H1 (cell line): ENCODE measurements at regions of chr1 and their contacts with region 1.

Region 1: GRCh38 chr1:43650310-43651085 is 549 bp downstream of the KDM4A start:
- DNase-seq: peak; percentile 92 to 96
- H3K4me3 ChIP-seq: peak overlapping the region; percentile 73 to 95 (median 90)
- H3K27ac ChIP-seq: peak overlapping the region; percentile 91
- H3K4me1 ChIP-seq: peaks cover 6 to 11% (median 7%) of the 10 kb centered on the region in 4 experiments; a peak in 5 of 7 replicates
- H3K27me3 ChIP-seq: no peaks in the 10 kb centered on the region
- CTCF ChIP-seq: no peak
- EP300 ChIP-seq: 0 out of 3 replicates have a peak, but pooled peaks of 1 of the 2 experiments have one; percentile 2
- POLR2A ChIP-seq: peak; percentile 99 to 100
- RAD21 ChIP-seq: no peak

Region 2: DNA sequence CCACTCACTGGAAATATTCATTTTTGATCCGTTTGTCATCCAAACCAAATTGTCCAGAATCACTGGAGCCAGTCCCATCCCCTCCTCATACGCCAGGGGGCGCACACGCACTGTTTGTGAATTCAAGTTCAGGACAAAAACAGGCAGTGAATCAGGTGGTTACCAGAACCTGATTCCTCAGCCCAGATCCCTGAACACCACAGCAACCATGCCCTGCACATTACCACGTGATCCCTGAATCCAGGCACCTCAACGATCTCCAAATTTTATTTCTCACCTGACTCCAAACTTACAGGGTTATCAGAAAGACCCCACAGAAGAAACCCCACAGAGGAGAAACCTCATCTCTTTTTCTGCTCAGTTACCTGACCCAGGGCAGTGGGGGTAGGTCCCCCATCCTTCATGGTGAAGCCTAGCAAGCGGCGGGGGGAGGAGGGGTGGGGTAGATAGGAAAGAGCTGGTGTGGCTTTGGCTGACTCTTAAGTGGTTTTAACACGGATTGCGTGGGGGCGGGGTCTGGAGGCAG is 121.2 kb before region 1 on chr1:
- CTCF ChIA-PET with region 1: interaction called, 5 read pairs
- POLR2A ChIA-PET with region 1: interaction called, 30 read pairs
- DNase-seq: peak in 1 of 2 experiments; percentile 90
- H3K4me3 ChIP-seq: peak overlapping the region in 1 of 4 experiments; percentile 45; a peak in 1 of 8 replicates
- H3K27ac ChIP-seq: no peak overlapping the region
- H3K4me1 ChIP-seq: peaks cover 15 to 21% (median 18%) of the 10 kb centered on the region in 4 experiments
- H3K27me3 ChIP-seq: peaks cover 0 to 8% (median 6%) of the 10 kb centered on the region in 4 experiments; a peak in 5 of 7 replicates
- CTCF ChIP-seq: peak; percentile 84 to 98 (median 90)
- EP300 ChIP-seq: no peak
- POLR2A ChIP-seq: no peak
- RAD21 ChIP-seq: peak; percentile 97 to 98

Region 3: GRCh38 chr1:43622471-43622870 is 28.0 kb before region 1 on chr1:
- CTCF ChIA-PET with region 1: interaction called, 4 read pairs
- POLR2A ChIA-PET with region 1: interaction called, 11 read pairs
- DNase-seq: no peak
- H3K4me3 ChIP-seq: no peak overlapping the region
- H3K27ac ChIP-seq: no peak overlapping the region
- H3K4me1 ChIP-seq: no peaks in the 10 kb centered on the region
- H3K27me3 ChIP-seq: no peaks in the 10 kb centered on the region
- CTCF ChIP-seq: no peak
- EP300 ChIP-seq: no peak
- POLR2A ChIP-seq: no peak
- RAD21 ChIP-seq: no peak

Region 4: GRCh38 chr1:43639976-43640789 is 10.3 kb before region 1 on chr1:
- CTCF ChIA-PET with region 1: interaction called, 14 read pairs
- POLR2A ChIA-PET with region 1: interaction called, 35 read pairs
- DNase-seq: no peak
- H3K4me3 ChIP-seq: no peak overlapping the region
- H3K27ac ChIP-seq: no peak overlapping the region
- H3K4me1 ChIP-seq: no peaks in the 10 kb centered on the region
- H3K27me3 ChIP-seq: no peaks in the 10 kb centered on the region; a peak in 2 of 7 replicates
- CTCF ChIP-seq: no peak
- EP300 ChIP-seq: no peak
- POLR2A ChIP-seq: no peak
- RAD21 ChIP-seq: peak; percentile 4 to 35; a peak in 2 of 4 replicates

Region 5: GRCh38 chr1:43706598-43707495 is 56.3 kb after region 1 on chr1:
- CTCF ChIA-PET with region 1: no interaction called
- POLR2A ChIA-PET with region 1: interaction called, 15 read pairs
- DNase-seq: peak; percentile 77 to 90
- H3K4me3 ChIP-seq: peak overlapping the region; percentile 71 to 91 (median 84)
- H3K27ac ChIP-seq: peak overlapping the region; percentile 72
- H3K4me1 ChIP-seq: peaks cover 0 to 6% (median 5%) of the 10 kb centered on the region in 4 experiments; a peak in 6 of 7 replicates
- H3K27me3 ChIP-seq: no peaks in the 10 kb centered on the region
- CTCF ChIP-seq: no peak
- EP300 ChIP-seq: no peak
- POLR2A ChIP-seq: peak; percentile 53 to 91
- RAD21 ChIP-seq: no peak

Region 6: GRCh38 chr1:43804569-43804968 is 154.1 kb after region 1 on chr1:
- CTCF ChIA-PET with region 1: no interaction called
- POLR2A ChIA-PET with region 1: no interaction called
- DNase-seq: no peak
- H3K4me3 ChIP-seq: no peak overlapping the region
- H3K27ac ChIP-seq: no peak overlapping the region
- H3K4me1 ChIP-seq: peaks cover 0 to 4% (median 0%) of the 10 kb centered on the region in 4 experiments; a peak in 2 of 7 replicates
- H3K27me3 ChIP-seq: no peaks in the 10 kb centered on the region
- CTCF ChIP-seq: no peak
- EP300 ChIP-seq: no peak
- POLR2A ChIP-seq: no peak
- RAD21 ChIP-seq: no peak